SK-N-SH (cell line): ENCODE measurements at regions of chr14 and their contacts with region 1.

Region 1: GRCh38 chr14:105480952-105481801 is 5.5 kb upstream of the CRIP1 start:
- DNase-seq: peak; percentile 92
- H3K4me3 ChIP-seq: peak overlapping the region; percentile 39 to 56
- H3K27ac ChIP-seq: peak overlapping the region; percentile 98 to 100
- H3K4me1 ChIP-seq: peaks cover 43 to 80% of the 10 kb centered on the region in 2 experiments; a peak in 3 of 4 replicates
- H3K27me3 ChIP-seq: no peaks in the 10 kb centered on the region
- CTCF ChIP-seq: peak; percentile 96
- EP300 ChIP-seq: peak in 1 of 2 experiments; percentile 16; a peak in 1 of 4 replicates
- RAD21 ChIP-seq: peak; percentile 67

Region 2: DNA sequence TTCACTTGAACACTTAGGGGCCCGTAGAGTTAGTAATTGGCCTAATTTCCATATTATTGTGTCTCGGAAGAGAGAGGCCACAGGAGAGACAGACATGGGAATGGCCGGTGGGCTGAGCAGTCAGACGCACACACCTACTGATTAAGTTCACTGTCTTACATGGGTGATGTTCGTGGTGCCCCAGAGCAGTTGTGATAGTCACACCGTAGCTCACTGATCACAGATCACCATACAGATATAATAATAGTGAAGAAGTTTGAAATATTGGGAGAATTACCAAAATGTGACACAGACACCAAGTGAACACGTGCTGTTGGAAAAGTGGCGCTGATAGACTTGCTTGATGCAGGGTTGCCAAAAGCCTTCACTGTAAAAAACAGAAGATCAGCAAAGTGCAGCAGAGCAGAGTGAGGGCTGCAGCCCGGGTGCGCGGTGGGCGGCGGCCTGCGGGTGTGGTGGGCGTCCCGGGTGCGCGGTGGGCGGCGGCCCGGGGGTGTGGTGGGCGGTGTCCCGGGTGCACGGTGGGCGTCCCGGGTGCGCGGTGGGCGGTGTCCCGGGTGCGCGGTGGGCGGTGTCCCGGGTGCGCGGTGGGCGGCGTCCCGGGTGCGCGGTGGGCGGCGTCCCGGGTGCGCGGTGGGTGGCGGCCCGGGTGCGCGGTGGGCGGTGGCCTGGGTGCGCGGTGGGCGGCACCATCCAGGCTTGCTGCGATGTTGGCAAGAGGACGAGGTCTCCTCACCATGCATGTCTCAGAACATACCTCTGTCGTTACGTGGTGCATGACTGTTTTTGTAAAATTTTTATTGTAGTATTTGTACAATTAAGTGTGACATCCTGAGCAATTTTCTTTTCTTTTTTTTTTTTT is 117.1 kb before region 1 on chr14:
- CTCF ChIA-PET with region 1: interaction called, 10 read pairs
- POLR2A ChIA-PET with region 1: no interaction called
- DNase-seq: peak; percentile 95
- H3K4me3 ChIP-seq: peak overlapping the region in 1 of 2 experiments; percentile 33; a peak in 2 of 4 replicates
- H3K27ac ChIP-seq: no peak overlapping the region
- H3K4me1 ChIP-seq: peaks cover 4 to 7% of the 10 kb centered on the region in 2 experiments; a peak in 2 of 4 replicates
- H3K27me3 ChIP-seq: no peaks in the 10 kb centered on the region
- CTCF ChIP-seq: no peak
- EP300 ChIP-seq: no peak
- RAD21 ChIP-seq: no peak

Region 3: GRCh38 chr14:105414456-105415371 is 66.5 kb before region 1 on chr14:
- CTCF ChIA-PET with region 1: interaction called, 18 read pairs
- POLR2A ChIA-PET with region 1: no interaction called
- DNase-seq: peak; percentile 94
- H3K4me3 ChIP-seq: peak overlapping the region; percentile 51 to 61
- H3K27ac ChIP-seq: peak overlapping the region in 1 of 2 experiments; percentile 62; a peak in 2 of 4 replicates
- H3K4me1 ChIP-seq: peaks cover 4 to 29% of the 10 kb centered on the region in 2 experiments; a peak in 1 of 4 replicates
- H3K27me3 ChIP-seq: no peaks in the 10 kb centered on the region
- CTCF ChIP-seq: peak; percentile 63
- EP300 ChIP-seq: no peak
- RAD21 ChIP-seq: no peak

Region 4: GRCh38 chr14:105439691-105440553 is 41.3 kb before region 1 on chr14:
- CTCF ChIA-PET with region 1: interaction called, 14 read pairs
- POLR2A ChIA-PET with region 1: interaction called, 4 read pairs
- DNase-seq: peak; percentile 68
- H3K4me3 ChIP-seq: no peak overlapping the region
- H3K27ac ChIP-seq: no peak overlapping the region
- H3K4me1 ChIP-seq: peaks cover 0 to 8% of the 10 kb centered on the region in 2 experiments; a peak in 1 of 4 replicates
- H3K27me3 ChIP-seq: no peaks in the 10 kb centered on the region
- CTCF ChIP-seq: no peak
- EP300 ChIP-seq: no peak
- RAD21 ChIP-seq: no peak

Region 5: DNA sequence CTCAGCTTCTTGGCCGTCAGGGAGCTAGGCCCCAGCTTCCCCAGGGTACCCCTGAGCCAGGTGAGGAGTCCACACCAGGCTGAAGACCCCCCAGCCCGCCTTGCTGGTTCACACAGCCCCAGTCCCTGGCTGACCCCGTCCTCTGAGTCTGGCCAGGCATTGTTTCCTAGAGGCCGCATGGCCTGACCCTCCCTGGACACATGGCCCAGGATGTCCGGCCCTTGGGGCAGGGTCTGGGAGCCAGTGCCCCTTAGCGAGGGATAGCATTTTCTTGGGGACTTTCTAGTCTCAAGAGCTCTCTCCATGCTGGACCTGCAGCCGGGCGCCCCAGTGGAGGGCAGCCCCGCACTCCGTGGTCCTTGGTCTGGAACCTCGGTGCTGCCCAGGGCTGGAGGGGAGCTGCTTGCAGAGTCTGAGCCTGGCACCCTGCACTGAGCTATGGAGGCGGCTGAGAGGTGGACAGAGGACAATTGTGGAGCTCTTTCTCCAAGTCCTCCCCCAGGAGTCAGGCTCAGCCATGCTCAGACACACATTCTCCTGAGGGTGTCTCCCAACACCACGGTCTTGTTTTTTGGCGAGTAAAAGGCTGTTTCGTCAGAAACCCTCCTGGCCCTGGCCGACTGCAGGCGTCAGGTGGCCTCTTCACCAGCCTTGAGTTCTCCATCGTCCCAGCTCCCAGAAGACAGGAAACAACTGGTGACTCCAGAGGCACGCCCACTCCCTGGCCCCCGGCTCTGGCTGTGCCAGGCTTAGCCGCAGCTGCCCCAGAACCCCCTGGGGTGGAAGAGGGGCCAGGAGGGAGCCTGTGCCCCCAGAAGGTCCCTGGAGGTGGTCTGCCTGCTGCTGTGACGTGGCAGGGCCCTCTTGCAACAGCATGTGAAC is 24.2 kb before region 1 on chr14:
- CTCF ChIA-PET with region 1: interaction called, 35 read pairs
- POLR2A ChIA-PET with region 1: interaction called, 5 read pairs
- DNase-seq: no peak
- H3K4me3 ChIP-seq: no peak overlapping the region
- H3K27ac ChIP-seq: no peak overlapping the region; a peak in 1 of 4 replicates
- H3K4me1 ChIP-seq: peaks cover 0 to 7% of the 10 kb centered on the region in 2 experiments; a peak in 1 of 4 replicates
- H3K27me3 ChIP-seq: no peaks in the 10 kb centered on the region
- CTCF ChIP-seq: no peak
- EP300 ChIP-seq: no peak
- RAD21 ChIP-seq: no peak

Region 6: DNA sequence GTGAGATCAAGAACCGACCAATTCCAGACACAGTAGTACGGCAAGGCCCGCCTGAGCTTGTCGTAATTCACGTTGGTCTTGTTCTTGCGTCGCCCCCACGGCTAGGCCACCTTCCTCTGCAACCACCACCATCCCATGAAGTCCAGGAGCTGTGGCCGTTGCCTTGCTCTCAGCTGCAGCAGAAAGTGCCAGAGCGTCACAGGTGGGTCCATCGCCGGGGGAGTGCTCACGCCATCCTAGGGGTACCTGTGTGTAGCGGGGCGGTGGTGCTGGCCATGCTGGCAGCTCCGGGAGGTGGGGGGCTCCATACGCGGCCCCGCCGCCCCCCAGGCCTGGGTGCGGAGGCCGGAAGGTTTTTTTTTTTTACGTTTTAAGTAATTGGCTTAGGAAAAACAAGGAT is 68.3 kb after region 1 on chr14:
- CTCF ChIA-PET with region 1: no interaction called
- POLR2A ChIA-PET with region 1: no interaction called
- DNase-seq: no peak
- H3K4me3 ChIP-seq: no peak overlapping the region
- H3K27ac ChIP-seq: no peak overlapping the region
- H3K4me1 ChIP-seq: no peaks in the 10 kb centered on the region
- H3K27me3 ChIP-seq: peaks cover 19% of the 10 kb centered on the region; the same call in 1 of the 2 replicates
- CTCF ChIP-seq: no peak
- EP300 ChIP-seq: no peak
- RAD21 ChIP-seq: no peak